ENCODE measurements at regions of chr14 and their contacts with region 1.

Region 1: GRCh38 chr14:100662879-100663760 is 63.6 kb upstream of the DLK1 start:
- DNase-seq: peak; percentile 85

Region 2: DNA sequence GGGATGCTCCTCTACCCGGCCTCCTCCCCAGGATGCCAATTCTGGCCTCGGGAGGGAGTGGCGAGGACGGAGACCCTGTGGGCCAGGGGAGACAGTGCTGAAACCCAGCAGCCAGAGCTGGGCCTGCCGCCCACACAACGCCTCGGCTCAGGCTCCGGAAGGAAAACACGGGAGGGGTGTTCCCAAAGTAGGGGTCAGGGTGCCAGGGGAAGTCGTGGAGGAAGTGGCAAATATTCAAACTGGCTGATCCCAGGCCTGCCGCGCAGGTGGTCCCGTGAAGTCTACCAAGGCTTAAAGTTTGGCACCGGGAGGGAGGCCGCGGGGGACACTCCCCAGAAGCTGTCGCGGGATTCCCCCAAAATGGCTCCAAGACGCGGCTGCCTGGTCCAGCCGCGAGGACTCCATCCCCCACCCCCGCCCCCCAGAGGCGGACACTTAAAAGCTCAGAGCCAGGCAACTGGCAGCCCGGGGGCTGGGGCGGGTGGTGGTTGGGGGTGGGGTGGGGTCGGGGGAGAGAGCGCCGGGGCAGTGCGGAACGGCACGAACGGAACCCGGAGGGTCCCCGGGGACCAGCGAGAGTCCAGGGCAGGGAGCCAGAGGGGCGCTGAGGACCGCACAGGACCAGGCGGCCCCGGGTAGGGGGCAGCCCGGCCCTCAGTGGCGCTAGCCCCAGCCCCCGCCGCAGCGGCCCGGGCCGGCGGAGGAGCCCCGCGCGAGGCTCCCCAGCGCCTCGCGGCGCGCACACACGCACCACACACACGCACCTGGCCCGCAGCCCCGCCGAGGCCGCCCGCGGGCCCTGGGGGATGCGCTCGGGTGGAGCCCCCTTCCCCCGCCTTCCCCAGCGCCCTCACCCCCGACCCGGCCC is 95.9 kb before region 1 on chr14:
- CTCF ChIA-PET with region 1: no interaction called
- POLR2A ChIA-PET with region 1: no interaction called
- DNase-seq: no peak

Region 3: GRCh38 chr14:100673036-100673806 is 10.1 kb after region 1 on chr14:
- CTCF ChIA-PET with region 1: interaction called, 10 read pairs
- POLR2A ChIA-PET with region 1: no interaction called
- DNase-seq: no peak